ENCODE measurements at regions of chr6 and their contacts with region 1.

Region 1: DNA sequence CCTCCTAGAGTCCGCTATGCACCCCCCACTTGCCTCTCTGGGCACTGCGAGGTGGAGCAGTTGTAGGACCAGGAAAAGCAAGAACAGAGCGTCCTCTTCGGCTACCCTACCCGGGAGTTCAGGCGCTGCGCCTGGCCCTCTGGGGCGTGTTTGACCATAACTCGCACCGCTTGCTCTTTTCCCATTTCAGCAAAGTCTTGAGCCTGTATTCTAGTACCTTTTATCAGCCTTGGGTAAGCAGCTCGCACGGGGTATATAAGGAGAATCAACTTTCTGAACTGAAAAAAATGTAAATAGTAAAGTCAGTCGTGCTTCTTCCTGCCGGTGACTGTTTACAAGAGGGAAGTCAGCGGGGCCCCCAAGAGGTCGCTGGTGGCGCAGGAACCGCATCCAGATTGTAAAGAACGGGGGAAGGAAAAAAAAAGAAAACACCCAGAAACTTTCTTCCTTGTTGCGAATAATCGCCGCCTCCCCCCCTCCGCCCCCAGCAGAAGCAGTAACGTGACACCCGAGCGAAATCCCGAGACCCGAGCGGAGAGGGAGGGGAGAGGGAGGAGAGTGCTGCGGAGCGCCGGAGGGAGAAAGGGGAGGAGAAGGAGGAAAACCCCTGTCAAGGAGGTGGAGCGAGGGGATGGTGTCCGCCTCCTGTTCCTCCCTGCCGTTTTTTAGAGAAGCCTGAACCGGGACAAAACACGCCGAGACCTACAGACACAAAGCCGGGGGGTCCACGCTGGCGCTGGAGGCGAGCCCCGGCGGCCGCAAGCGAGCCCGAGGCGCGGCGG is at the start of gene UST:
- DNase-seq: peak; percentile 74
- ATAC-seq: peak; percentile 71
- H3K4me3 ChIP-seq: peak within 1 kb of the TSS; percentile 88
- H3K27ac ChIP-seq: 0 out of 2 replicates have a peak within 1 kb of the TSS, but pooled peaks have one; percentile 5
- H3K4me1 ChIP-seq: peaks cover 7% of the 10 kb centered on the region; the same call in 1 of the 2 replicates
- H3K27me3 ChIP-seq: no peaks in the 10 kb centered on the region
- CTCF ChIP-seq: peak; percentile 51; the same call in 1 of the 2 replicates
- total RNA-seq, gene UST: 3.9 and 7.9 TPM in 2 replicates

Region 2: GRCh38 chr6:148501178-148501590 is 245.4 kb before region 1 on chr6:
- CTCF ChIA-PET with region 1: no interaction called
- POLR2A ChIA-PET with region 1: no interaction called
- intact Hi-C with region 1: no loop called
- DNase-seq: peak; percentile 87
- ATAC-seq: peak; percentile 100
- H3K4me3 ChIP-seq: no peak overlapping the region
- H3K27ac ChIP-seq: peak overlapping the region; percentile 52
- H3K4me1 ChIP-seq: peaks cover 11% of the 10 kb centered on the region
- H3K27me3 ChIP-seq: no peaks in the 10 kb centered on the region
- CTCF ChIP-seq: no peak

Region 3: DNA sequence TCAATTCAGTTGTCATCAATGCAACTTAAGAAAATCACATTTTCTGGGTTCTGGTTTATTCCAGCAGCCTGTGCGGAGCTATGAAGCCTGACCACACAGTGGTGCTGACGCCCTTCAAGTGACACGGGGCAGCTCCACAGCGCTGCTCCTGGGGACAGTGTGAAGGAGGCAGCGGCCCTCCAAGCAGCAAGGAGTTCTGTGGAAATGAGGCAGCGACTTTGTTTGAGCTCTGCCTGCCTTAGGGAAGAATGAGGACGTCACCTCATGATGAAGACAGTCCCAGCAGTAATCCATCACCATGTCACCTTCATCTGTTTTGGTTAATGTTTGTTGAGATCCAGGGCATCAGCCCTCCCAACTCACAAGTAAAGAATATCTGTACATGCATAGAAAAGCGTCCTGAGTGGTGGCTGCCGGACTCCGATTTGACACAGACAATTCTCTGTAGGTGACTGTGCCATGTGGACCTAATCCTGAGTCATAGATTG is 168.3 kb before region 1 on chr6:
- CTCF ChIA-PET with region 1: no interaction called
- POLR2A ChIA-PET with region 1: no interaction called
- intact Hi-C with region 1: loop called (anchors 2 kb)
- DNase-seq: peak; percentile 80
- ATAC-seq: peak; percentile 100
- H3K4me3 ChIP-seq: peak overlapping the region; percentile 43; the same call in 1 of the 2 replicates
- H3K27ac ChIP-seq: no peak overlapping the region
- H3K4me1 ChIP-seq: peaks cover 12% of the 10 kb centered on the region; the same call in 1 of the 2 replicates
- H3K27me3 ChIP-seq: no peaks in the 10 kb centered on the region
- CTCF ChIP-seq: peak; percentile 95

Region 4: GRCh38 chr6:148693882-148694484 is 52.6 kb before region 1 on chr6:
- CTCF ChIA-PET with region 1: interaction called, 12 read pairs
- POLR2A ChIA-PET with region 1: no interaction called
- intact Hi-C with region 1: no loop called
- DNase-seq: no peak
- ATAC-seq: no peak
- H3K4me3 ChIP-seq: no peak overlapping the region
- H3K27ac ChIP-seq: no peak overlapping the region
- H3K4me1 ChIP-seq: no peaks in the 10 kb centered on the region
- H3K27me3 ChIP-seq: no peaks in the 10 kb centered on the region
- CTCF ChIP-seq: no peak

Region 5: DNA sequence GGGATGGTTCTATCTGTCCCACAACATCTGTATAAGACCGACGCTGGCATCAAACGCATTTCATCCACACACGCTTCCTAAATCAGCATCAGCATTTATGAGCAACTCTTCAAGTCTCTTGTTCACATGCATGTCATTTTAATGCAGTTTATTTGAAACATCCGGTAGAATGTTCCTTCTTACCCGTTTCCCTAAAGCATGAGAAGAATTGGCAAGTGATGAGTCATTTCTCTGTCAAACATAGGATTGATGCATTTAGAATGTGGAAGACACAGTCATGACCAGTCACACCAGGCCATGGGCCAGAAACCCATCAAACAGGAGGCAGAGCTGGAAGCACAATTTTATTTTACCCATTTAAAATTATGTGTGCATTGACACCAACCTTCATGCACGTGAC is 123.0 kb after region 1 on chr6:
- CTCF ChIA-PET with region 1: no interaction called
- POLR2A ChIA-PET with region 1: no interaction called
- intact Hi-C with region 1: loop called (anchors 2 kb)
- DNase-seq: peak; percentile 96
- ATAC-seq: peak; percentile 90
- H3K4me3 ChIP-seq: no peak overlapping the region
- H3K27ac ChIP-seq: peak overlapping the region; percentile 88
- H3K4me1 ChIP-seq: peaks cover 33% of the 10 kb centered on the region
- H3K27me3 ChIP-seq: no peaks in the 10 kb centered on the region
- CTCF ChIP-seq: no peak

Region 6: GRCh38 chr6:148947621-148948444 is 201.3 kb after region 1 on chr6:
- CTCF ChIA-PET with region 1: no interaction called
- POLR2A ChIA-PET with region 1: no interaction called
- intact Hi-C with region 1: loop called (anchors 1 kb)
- DNase-seq: peak; percentile 86
- ATAC-seq: peak; percentile 88
- H3K4me3 ChIP-seq: no peak overlapping the region
- H3K27ac ChIP-seq: no peak overlapping the region
- H3K4me1 ChIP-seq: peaks cover 16% of the 10 kb centered on the region
- H3K27me3 ChIP-seq: no peaks in the 10 kb centered on the region
- CTCF ChIP-seq: peak; percentile 74

Region 7: DNA sequence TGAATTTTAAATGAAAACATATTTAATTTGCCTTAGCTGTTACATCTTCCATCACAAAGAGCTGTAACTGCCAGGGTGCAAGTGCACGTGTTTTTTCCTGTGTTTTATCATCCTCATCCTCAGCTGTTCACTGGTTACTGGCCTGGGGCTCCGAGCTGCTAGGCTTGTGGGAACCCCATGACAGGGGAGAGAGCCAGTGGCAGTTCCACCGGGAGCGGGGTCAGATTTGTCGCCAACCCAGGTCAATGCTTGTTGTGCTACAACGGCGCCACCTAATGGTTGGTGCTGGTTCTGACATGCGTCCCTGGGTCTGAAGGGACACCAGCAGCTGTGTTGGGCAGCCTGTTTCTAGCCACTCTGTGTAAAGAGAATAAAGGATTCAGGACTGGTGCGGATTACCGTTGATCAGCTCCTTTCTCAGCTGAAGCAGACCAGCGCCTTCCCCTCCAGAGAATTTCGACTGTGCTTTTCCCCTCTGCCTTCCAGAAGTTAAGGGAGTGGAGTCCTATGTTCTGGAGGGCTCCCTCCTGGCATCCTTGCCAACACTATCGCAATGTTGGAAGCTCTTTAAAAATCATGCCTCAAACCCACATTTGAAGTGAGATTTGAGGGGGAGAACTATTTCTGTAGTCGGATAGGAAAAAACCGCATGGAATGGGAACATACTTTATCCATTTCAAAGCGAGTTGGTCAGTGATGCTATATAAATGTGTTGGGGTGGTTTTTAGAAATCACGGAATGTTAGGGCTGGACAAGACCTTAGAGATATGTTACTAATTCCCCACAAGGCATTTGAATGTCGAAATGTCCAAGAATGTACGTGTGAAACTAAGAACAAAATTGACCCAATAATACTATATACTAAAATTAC is 685.6 kb after region 1 on chr6:
- CTCF ChIA-PET with region 1: no interaction called
- POLR2A ChIA-PET with region 1: no interaction called
- intact Hi-C with region 1: loop called (anchors 5 kb)
- DNase-seq: peak; percentile 87
- ATAC-seq: peak; percentile 94
- H3K4me3 ChIP-seq: no peak overlapping the region
- H3K27ac ChIP-seq: no peak overlapping the region
- H3K4me1 ChIP-seq: no peaks in the 10 kb centered on the region
- H3K27me3 ChIP-seq: no peaks in the 10 kb centered on the region
- CTCF ChIP-seq: peak; percentile 89